PC-9 (cell line): ENCODE measurements at regions of chr9 and their contacts with region 1.

Region 1: GRCh38 chr9:91060503-91061343 is 259.1 kb downstream of the SYK start:
- DNase-seq: peak; percentile 78 to 93
- H3K4me3 ChIP-seq: peak overlapping the region; percentile 35; the same call in 1 of the 2 replicates
- H3K27ac ChIP-seq: peak overlapping the region; percentile 86
- H3K4me1 ChIP-seq: peaks cover 48% of the 10 kb centered on the region
- H3K27me3 ChIP-seq: no peaks in the 10 kb centered on the region
- CTCF ChIP-seq: no peak

Region 2: GRCh38 chr9:91164724-91165520 is 104.2 kb after region 1 on chr9:
- CTCF ChIA-PET with region 1: no interaction called
- POLR2A ChIA-PET with region 1: no interaction called
- intact Hi-C with region 1: loop called (anchors 5 kb)
- DNase-seq: peak; percentile 91 to 92
- H3K4me3 ChIP-seq: no peak overlapping the region
- H3K27ac ChIP-seq: peak overlapping the region; percentile 51; the same call in 1 of the 2 replicates
- H3K4me1 ChIP-seq: peaks cover 59% of the 10 kb centered on the region
- H3K27me3 ChIP-seq: no peaks in the 10 kb centered on the region
- CTCF ChIP-seq: no peak

Region 3: GRCh38 chr9:91273853-91274552 is 213.3 kb after region 1 on chr9:
- CTCF ChIA-PET with region 1: no interaction called
- POLR2A ChIA-PET with region 1: no interaction called
- intact Hi-C with region 1: no loop called
- DNase-seq: no peak
- H3K4me3 ChIP-seq: no peak overlapping the region
- H3K27ac ChIP-seq: 0 out of 2 replicates have a peak overlapping the region, but pooled peaks have one; percentile 11
- H3K4me1 ChIP-seq: 0 out of 2 replicates have a peak, but pooled peaks cover 8% of the 10 kb centered on the region
- H3K27me3 ChIP-seq: no peaks in the 10 kb centered on the region
- CTCF ChIP-seq: no peak

Region 4: DNA sequence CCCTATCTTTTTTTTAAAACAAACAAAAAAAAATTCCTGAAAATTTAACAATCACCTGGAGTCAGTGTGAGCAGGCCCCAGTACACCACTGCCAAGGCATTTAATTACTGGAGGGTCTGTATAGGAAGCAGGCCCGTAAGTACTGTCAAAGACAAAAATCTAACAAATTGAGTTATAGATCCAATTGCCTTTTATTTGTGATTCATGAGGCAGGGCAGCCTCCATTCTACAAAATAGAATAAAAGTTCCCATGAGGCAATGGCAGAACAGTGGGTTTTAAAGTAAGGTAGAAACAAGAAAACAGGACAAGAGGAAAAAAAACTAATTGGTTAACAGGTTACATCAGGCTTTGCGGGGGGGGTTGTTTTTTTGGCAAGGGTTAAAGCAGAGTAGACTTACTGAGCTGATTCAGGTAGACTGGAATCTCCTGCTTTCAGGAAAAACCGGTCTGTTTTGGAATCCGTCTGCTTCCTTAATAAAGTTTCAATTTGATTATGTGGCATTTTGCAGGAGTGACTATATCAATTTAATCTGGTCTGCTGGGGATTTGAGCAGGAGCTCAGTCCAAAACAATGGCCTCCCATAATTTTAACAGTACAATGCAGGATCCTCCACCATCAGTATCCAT is 252.1 kb after region 1 on chr9:
- CTCF ChIA-PET with region 1: no interaction called
- POLR2A ChIA-PET with region 1: no interaction called
- intact Hi-C with region 1: loop called (anchors 10 kb)
- DNase-seq: peak; percentile 74 to 98
- H3K4me3 ChIP-seq: no peak overlapping the region
- H3K27ac ChIP-seq: peak overlapping the region; percentile 85
- H3K4me1 ChIP-seq: peaks cover 55% of the 10 kb centered on the region
- H3K27me3 ChIP-seq: no peaks in the 10 kb centered on the region
- CTCF ChIP-seq: no peak